ENCODE measurements at regions of chr6 and their contacts with region 1.

Region 1: DNA sequence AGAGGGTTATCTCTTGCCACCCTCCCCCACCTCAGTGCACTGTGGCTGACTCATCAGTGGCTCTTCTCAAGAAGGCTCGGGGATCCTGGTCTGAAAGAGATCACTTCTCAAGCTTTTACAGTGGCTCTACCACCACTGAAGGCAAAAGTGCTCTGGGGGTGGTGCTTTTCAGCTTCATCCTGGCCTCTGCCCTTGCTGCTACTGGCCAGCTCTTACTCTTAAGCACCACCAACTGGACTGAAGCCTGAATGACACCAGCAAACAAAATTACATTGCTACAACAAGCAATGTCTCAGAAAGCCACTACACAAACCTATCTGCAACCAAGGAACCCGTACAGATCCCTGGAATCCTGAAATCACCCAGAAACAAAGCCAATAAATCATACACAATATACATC is 402.1 kb downstream of the EPHA7 start:
- DNase-seq: no peak
- ATAC-seq: no peak
- H3K4me3 ChIP-seq: no peak overlapping the region
- H3K27ac ChIP-seq: no peak overlapping the region
- H3K4me1 ChIP-seq: no peaks in the 10 kb centered on the region
- H3K27me3 ChIP-seq: no peaks in the 10 kb centered on the region
- CTCF ChIP-seq: no peak
- EP300 ChIP-seq: no peak
- POLR2A ChIP-seq: no peak
- RAD21 ChIP-seq: no peak

Region 2: DNA sequence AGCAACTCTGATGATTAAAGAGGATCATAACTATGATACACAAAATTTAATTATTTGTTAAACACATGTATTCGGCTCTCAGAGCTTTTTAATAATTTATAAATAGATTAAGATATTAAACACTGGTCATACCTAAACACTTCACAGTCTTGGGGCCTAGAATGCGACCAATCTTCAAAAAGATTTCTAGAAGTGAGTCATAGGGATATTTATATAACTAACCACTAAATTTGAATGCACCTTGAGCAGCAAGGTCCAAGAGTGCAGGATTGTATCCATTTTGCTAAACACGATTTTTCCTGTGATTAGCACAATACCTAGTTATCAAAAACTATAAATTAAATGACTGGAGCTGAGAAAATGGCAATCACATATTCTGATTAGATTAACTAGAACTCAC is 307.2 kb before region 1 on chr6:
- CTCF ChIA-PET with region 1: no interaction called
- POLR2A ChIA-PET with region 1: no interaction called
- in situ Hi-C with region 1: no loop called
- intact Hi-C with region 1: no loop called
- DNase-seq: no peak
- ATAC-seq: no peak
- H3K4me3 ChIP-seq: no peak overlapping the region
- H3K27ac ChIP-seq: no peak overlapping the region
- H3K4me1 ChIP-seq: no peaks in the 10 kb centered on the region
- H3K27me3 ChIP-seq: no peaks in the 10 kb centered on the region
- CTCF ChIP-seq: no peak
- EP300 ChIP-seq: no peak
- POLR2A ChIP-seq: no peak
- RAD21 ChIP-seq: no peak

Region 3: GRCh38 chr6:92826633-92827032 is 190.6 kb before region 1 on chr6:
- CTCF ChIA-PET with region 1: no interaction called
- POLR2A ChIA-PET with region 1: no interaction called
- in situ Hi-C with region 1: no loop called
- intact Hi-C with region 1: no loop called
- DNase-seq: no peak
- ATAC-seq: no peak
- H3K4me3 ChIP-seq: no peak overlapping the region
- H3K27ac ChIP-seq: no peak overlapping the region
- H3K4me1 ChIP-seq: no peaks in the 10 kb centered on the region
- H3K27me3 ChIP-seq: no peaks in the 10 kb centered on the region
- CTCF ChIP-seq: no peak
- EP300 ChIP-seq: no peak
- POLR2A ChIP-seq: no peak
- RAD21 ChIP-seq: no peak

Region 4: DNA sequence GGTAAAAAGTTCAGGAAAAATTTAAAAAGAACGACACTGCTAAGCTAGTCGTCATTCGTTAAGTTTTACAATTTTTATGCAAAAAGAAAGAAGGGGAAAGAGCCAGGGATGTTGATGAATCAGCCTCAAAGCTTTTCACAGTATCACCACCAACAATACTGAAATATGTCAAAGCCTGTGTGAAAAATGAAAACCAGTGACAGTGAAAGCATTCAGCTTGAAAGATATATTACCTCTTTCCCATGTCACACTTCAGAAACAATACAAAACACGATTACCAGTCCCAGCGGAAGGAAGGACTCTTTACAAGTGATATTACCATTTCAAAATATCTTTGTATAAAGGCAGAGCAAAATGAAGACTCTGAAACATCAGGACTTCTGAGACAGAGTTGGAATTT is 87.0 kb before region 1 on chr6:
- CTCF ChIA-PET with region 1: no interaction called
- POLR2A ChIA-PET with region 1: no interaction called
- in situ Hi-C with region 1: no loop called
- intact Hi-C with region 1: no loop called
- DNase-seq: no peak
- ATAC-seq: no peak
- H3K4me3 ChIP-seq: no peak overlapping the region
- H3K27ac ChIP-seq: no peak overlapping the region
- H3K4me1 ChIP-seq: no peaks in the 10 kb centered on the region
- H3K27me3 ChIP-seq: no peaks in the 10 kb centered on the region
- CTCF ChIP-seq: no peak
- EP300 ChIP-seq: no peak
- POLR2A ChIP-seq: no peak
- RAD21 ChIP-seq: no peak

Region 5: DNA sequence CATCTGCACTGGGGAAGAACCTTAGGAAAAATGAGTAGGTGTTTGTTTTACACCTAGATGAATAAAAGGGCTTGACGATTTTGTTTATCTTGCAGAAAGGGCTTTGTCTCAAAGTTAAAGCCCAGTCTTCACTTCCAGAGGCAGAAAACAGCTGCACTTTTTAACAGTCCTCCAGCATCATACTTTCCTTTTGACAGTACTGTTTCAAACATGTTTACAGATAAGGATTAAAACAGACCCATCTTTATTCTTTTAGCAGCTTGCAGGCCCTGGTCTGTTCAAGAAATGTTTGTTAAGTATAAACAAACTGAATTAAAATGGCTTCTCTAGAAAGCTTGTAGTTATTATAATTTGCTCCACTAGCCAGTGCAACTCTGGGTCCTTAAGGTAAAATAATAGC is 27.9 kb after region 1 on chr6:
- CTCF ChIA-PET with region 1: no interaction called
- POLR2A ChIA-PET with region 1: no interaction called
- in situ Hi-C with region 1: no loop called
- intact Hi-C with region 1: loop called (anchors 2 kb)
- DNase-seq: no peak
- ATAC-seq: no peak
- H3K4me3 ChIP-seq: no peak overlapping the region
- H3K27ac ChIP-seq: no peak overlapping the region
- H3K4me1 ChIP-seq: no peaks in the 10 kb centered on the region
- H3K27me3 ChIP-seq: no peaks in the 10 kb centered on the region
- CTCF ChIP-seq: no peak
- EP300 ChIP-seq: no peak
- POLR2A ChIP-seq: no peak
- RAD21 ChIP-seq: no peak

Region 6: GRCh38 chr6:93139408-93140081 is 122.3 kb after region 1 on chr6:
- CTCF ChIA-PET with region 1: no interaction called
- POLR2A ChIA-PET with region 1: no interaction called
- in situ Hi-C with region 1: no loop called
- intact Hi-C with region 1: no loop called
- DNase-seq: no peak
- ATAC-seq: no peak
- H3K4me3 ChIP-seq: no peak overlapping the region
- H3K27ac ChIP-seq: no peak overlapping the region
- H3K4me1 ChIP-seq: no peaks in the 10 kb centered on the region
- H3K27me3 ChIP-seq: no peaks in the 10 kb centered on the region
- CTCF ChIP-seq: no peak
- EP300 ChIP-seq: no peak
- POLR2A ChIP-seq: no peak
- RAD21 ChIP-seq: no peak